ENCODE measurements at regions of chr21 and their contacts with region 1.

Region 1: GRCh38 chr21:46128106-46128860 is 27.1 kb downstream of the FTCD start:
- DNase-seq: no peak
- ATAC-seq: no peak
- H3K4me3 ChIP-seq: no peak overlapping the region
- H3K27ac ChIP-seq: no peak overlapping the region
- H3K4me1 ChIP-seq: no peaks in the 10 kb centered on the region
- CTCF ChIP-seq: no peak
- EP300 ChIP-seq: no peak
- POLR2A ChIP-seq: no peak
- RAD21 ChIP-seq: no peak

Region 2: DNA sequence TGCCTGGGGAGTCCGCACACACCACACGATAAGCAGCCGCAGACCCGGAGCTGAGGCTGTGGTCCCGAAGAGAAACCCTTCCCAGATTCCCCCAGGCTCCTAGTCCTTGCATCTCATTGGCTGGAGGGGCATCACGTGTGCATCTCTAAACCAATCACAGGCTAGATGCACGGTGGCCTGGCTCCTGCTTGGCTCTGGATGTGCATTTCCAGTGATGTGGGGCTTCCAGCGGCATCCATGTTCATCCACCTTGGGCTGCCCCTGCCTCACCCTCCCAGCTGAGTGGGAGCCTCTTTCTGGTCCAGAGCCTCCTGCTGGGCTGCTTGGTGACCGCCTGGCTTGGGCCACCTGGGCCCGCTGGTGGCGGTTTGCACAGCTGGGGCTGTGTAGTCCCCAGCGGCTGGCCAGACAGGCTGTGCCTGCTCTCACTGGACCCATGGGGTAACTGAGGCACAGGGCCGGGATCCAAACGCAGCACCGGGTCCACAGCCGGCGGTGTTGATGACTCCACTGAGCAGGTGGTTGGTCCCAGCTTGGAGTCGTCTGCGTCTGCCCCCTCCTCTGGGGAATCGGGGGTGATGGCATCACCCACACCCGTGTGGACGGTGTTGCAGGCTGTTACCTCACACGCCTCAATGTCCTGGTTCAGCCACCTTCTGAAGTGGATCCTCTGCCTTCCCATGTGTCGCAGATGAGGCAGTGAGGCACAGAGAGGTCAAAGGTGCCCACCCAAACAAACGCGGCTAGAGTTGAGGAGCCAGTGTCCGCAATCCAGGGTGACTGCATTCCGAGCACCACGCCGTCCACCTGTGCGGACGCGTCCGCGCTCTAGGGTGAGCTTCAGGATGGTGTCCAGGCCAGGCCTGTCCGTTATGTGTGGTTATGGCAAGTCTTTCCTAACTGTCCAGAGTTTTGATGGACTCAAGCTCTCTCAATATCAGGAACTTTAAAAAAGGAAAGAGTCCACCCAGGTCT is 105.4 kb before region 1 on chr21:
- CTCF ChIA-PET with region 1: no interaction called
- POLR2A ChIA-PET with region 1: no interaction called
- DNase-seq: peak in 1 of 2 experiments; percentile 14
- ATAC-seq: peak in 1 of 2 experiments; percentile 53; a peak in 2 of 6 replicates
- H3K4me3 ChIP-seq: no peak overlapping the region
- H3K27ac ChIP-seq: no peak overlapping the region
- H3K4me1 ChIP-seq: no peaks in the 10 kb centered on the region
- CTCF ChIP-seq: no peak
- EP300 ChIP-seq: no peak
- POLR2A ChIP-seq: no peak
- RAD21 ChIP-seq: no peak

Region 3: DNA sequence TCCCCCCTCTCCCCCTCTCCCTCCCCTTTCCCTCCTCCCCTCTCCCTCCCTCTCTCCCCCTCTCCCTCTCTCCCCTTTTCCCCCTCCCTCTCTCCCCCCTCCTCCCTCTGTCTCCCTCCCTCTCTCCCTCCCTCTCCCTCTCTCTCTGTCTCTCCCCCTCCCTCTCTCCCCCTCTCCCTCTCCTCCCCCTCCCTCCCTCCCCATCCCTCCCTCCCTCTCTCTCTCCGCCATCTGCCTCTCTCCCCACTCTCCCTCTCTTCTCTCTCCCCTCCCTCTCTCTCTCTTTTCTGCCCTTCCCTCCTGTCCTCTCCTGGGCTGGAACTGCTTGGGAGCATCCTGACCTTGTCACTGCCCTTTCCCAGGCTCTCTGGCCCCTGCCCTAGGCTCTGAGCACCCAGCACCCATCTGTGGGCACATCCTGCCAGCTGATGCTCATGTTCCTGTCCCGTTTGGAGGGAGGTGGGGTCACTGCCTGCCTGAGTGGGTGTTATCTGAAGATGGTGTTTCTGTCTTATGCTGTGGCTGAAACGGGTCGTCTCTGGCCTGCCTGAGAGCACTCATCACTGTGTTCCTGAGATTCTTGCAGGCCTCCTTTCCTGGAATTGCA is 16.3 kb after region 1 on chr21:
- CTCF ChIA-PET with region 1: interaction called, 11 read pairs
- POLR2A ChIA-PET with region 1: no interaction called
- DNase-seq: no peak
- ATAC-seq: no peak
- H3K4me3 ChIP-seq: no peak overlapping the region
- H3K27ac ChIP-seq: peak overlapping the region in 1 of 2 experiments; percentile 81; a peak in 4 of 6 replicates
- H3K4me1 ChIP-seq: no peaks in the 10 kb centered on the region
- CTCF ChIP-seq: no peak
- EP300 ChIP-seq: no peak
- POLR2A ChIP-seq: no peak
- RAD21 ChIP-seq: no peak